BJ (cell line): ENCODE measurements at regions of chr15 and their contacts with region 1.

Region 1: GRCh38 chr15:90482124-90483011 is 47.4 kb upstream of the CRTC3 start:
- DNase-seq: peak; percentile 18
- H3K4me3 ChIP-seq: no peak overlapping the region
- H3K27me3 ChIP-seq: no peaks in the 10 kb centered on the region
- CTCF ChIP-seq: peak; percentile 76

Region 2: GRCh38 chr15:90291679-90292356 is 190.6 kb before region 1 on chr15:
- CTCF ChIA-PET with region 1: interaction called, 13 read pairs
- POLR2A ChIA-PET with region 1: no interaction called
- DNase-seq: no peak
- H3K4me3 ChIP-seq: no peak overlapping the region
- H3K27me3 ChIP-seq: no peaks in the 10 kb centered on the region
- CTCF ChIP-seq: no peak

Region 3: GRCh38 chr15:90306560-90306959 is 175.8 kb before region 1 on chr15:
- CTCF ChIA-PET with region 1: interaction called, 14 read pairs
- POLR2A ChIA-PET with region 1: no interaction called
- DNase-seq: no peak
- H3K4me3 ChIP-seq: no peak overlapping the region
- H3K27me3 ChIP-seq: no peaks in the 10 kb centered on the region
- CTCF ChIP-seq: no peak

Region 4: DNA sequence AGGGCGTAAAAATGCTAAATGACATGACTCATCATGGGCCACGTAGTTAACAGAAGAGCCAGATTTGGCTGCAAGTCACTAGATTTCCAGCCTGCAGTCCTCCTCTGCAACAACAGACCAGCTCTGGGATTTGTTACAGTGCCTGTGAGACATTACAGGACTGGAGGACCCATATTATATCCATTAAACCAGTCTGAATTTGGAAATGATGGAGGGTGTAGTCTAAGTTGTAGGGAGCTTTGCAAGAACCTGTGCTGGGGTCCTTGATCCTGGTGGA is 119.5 kb before region 1 on chr15:
- CTCF ChIA-PET with region 1: interaction called, 51 read pairs
- POLR2A ChIA-PET with region 1: no interaction called
- DNase-seq: peak; percentile 52
- H3K4me3 ChIP-seq: no peak overlapping the region
- H3K27me3 ChIP-seq: no peaks in the 10 kb centered on the region
- CTCF ChIP-seq: no peak

Region 5: DNA sequence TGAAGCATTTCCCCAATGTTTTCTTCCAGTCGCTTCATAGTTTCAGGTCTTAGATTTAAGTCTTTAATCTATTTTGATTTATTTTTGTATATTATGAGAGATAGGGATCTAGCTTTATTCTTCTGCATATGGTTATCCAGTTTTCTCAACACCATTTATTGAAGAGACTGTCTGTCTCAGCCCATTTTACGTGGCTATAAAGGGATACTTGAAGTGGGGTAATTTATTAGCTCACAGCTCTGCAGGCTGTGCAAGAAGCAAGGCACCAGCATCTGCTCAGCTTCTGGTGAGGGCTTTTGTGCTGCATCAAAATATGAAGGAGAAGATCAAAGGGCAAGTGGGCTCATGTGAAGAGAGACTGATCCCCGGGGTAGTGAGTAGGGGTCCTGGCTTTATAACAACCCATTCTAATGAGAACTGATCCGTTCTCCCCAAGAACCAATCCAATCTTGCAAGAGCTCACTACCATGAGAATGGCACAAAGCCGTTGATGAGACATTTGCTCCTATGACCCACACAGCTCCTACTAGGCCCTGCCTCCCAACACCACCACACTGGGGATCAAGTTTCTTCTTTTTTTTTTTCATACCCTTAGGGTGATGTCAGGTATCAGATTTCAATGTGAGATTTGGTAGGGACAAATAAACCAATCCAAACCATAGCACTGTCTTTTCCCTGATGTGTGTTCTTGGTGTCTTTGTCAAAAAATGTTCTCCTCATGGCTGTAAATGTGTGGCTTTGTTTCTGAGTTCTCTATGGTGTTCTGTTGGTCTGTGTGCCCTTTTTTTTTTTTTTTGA is 31.1 kb before region 1 on chr15:
- CTCF ChIA-PET with region 1: interaction called, 12 read pairs
- POLR2A ChIA-PET with region 1: no interaction called
- DNase-seq: peak; percentile 20
- H3K4me3 ChIP-seq: no peak overlapping the region
- H3K27me3 ChIP-seq: no peaks in the 10 kb centered on the region
- CTCF ChIP-seq: no peak

Region 6: DNA sequence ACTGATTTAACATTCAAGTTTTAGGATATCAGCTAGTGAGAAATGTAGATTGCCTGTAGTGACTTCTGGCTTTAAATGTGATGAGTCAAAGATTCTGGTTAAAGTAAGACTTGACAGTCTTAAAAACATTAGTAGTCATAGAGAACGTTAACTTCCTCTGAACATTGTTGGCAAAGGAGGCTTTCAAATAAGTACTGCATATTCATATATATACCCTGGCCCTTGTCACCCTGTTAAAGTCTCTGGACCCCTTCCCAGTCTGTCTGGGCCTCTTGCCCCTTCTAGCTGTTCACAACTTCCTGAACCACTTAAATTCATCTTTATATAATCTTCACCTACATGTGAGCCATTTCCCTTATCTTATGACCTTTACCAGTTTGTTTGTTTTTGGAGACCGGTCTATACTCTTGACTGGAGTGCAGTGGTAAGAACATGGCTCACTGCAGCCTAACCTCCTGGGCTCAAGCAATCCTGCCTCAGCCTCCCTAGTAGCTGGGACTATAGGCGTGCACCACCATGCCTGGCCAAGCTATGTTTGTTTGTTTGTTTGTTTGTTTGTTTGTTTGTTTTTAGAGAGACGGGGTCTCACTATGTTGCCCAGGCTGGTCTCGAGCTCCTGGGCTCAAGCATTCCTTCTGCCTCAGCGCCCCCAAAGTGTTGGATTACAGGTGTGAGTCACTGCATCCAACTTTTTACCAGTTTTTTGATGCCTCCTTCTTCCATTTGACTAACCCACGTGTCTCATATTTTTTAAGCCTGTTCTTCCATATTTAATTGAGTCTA is 17.0 kb before region 1 on chr15:
- CTCF ChIA-PET with region 1: interaction called, 19 read pairs
- POLR2A ChIA-PET with region 1: no interaction called
- DNase-seq: no peak
- H3K4me3 ChIP-seq: no peak overlapping the region
- H3K27me3 ChIP-seq: no peaks in the 10 kb centered on the region
- CTCF ChIP-seq: no peak

Region 7: GRCh38 chr15:90501898-90502297 is 19.5 kb after region 1 on chr15:
- CTCF ChIA-PET with region 1: interaction called, 10 read pairs
- POLR2A ChIA-PET with region 1: no interaction called
- DNase-seq: no peak
- H3K4me3 ChIP-seq: no peak overlapping the region
- H3K27me3 ChIP-seq: no peaks in the 10 kb centered on the region
- CTCF ChIP-seq: no peak